ENCODE measurements at regions of chr4 and their contacts with region 1.

Region 1: GRCh38 chr4:17576932-17577665 is at the start of gene LAP3:
- DNase-seq: peak; percentile 99
- ATAC-seq: peak; percentile 90
- H3K4me3 Mint-ChIP-seq: peak within 1 kb of the TSS; percentile 89
- H3K27ac Mint-ChIP-seq: peak within 1 kb of the TSS; percentile 92
- H3K4me1 Mint-ChIP-seq: peaks cover 32% of the 10 kb centered on the region
- H3K27me3 Mint-ChIP-seq: no peaks in the 10 kb centered on the region
- CTCF ChIP-seq: no peak
- total RNA-seq, gene LAP3: 45.1 and 50.5 TPM in 2 replicates

Region 2: DNA sequence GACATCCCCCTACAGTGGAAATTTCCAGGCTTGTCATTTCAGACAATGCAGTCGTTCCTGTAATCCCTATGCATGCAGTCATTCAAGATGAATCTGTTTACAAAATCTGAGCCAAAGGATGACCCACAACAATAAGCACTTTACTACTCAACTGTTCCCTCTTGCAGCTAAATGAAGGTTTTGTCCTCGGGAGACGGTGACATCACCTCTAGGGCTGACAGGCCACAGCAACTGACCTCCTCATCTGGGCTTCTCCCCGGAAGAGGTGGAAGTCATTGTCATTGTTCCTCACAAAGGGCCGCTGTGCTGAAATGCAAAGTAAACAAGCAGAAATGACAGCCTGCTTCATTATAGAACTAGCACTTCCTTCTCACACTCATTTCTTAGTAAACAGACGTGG is 32.9 kb before region 1 on chr4:
- CTCF ChIA-PET with region 1: interaction called, 3 read pairs
- POLR2A ChIA-PET with region 1: no interaction called
- intact Hi-C with region 1: loop called (anchors 1 kb)
- DNase-seq: no peak
- ATAC-seq: no peak
- H3K4me3 Mint-ChIP-seq: no peak overlapping the region
- H3K27ac Mint-ChIP-seq: no peak overlapping the region
- H3K4me1 Mint-ChIP-seq: peaks cover 3% of the 10 kb centered on the region
- H3K27me3 Mint-ChIP-seq: peaks cover 9% of the 10 kb centered on the region
- CTCF ChIP-seq: no peak

Region 3: DNA sequence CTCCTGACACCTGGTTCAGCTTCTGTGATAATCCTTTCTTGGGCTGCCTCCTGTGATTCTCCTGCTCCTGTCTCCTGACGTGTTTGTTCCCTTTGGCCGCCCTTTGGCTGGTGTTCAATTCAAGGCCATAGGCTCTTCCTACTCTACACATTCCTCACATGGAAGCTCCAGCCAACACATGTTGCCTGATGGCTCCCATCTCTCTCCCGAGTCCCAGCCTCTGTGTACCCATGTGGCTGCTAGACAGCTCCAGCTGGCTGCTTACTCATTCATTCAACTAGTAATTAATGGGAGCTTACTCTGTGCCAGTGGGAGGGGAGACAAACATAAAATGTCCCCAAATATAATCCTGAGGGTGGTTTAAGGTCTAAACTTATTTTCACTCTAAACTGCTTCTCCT is 28.1 kb after region 1 on chr4:
- CTCF ChIA-PET with region 1: no interaction called
- POLR2A ChIA-PET with region 1: interaction called, 11 read pairs
- intact Hi-C with region 1: no loop called
- DNase-seq: no peak
- ATAC-seq: no peak
- H3K4me3 Mint-ChIP-seq: no peak overlapping the region
- H3K27ac Mint-ChIP-seq: no peak overlapping the region
- H3K4me1 Mint-ChIP-seq: no peaks in the 10 kb centered on the region
- H3K27me3 Mint-ChIP-seq: no peaks in the 10 kb centered on the region
- CTCF ChIP-seq: no peak

Region 4: DNA sequence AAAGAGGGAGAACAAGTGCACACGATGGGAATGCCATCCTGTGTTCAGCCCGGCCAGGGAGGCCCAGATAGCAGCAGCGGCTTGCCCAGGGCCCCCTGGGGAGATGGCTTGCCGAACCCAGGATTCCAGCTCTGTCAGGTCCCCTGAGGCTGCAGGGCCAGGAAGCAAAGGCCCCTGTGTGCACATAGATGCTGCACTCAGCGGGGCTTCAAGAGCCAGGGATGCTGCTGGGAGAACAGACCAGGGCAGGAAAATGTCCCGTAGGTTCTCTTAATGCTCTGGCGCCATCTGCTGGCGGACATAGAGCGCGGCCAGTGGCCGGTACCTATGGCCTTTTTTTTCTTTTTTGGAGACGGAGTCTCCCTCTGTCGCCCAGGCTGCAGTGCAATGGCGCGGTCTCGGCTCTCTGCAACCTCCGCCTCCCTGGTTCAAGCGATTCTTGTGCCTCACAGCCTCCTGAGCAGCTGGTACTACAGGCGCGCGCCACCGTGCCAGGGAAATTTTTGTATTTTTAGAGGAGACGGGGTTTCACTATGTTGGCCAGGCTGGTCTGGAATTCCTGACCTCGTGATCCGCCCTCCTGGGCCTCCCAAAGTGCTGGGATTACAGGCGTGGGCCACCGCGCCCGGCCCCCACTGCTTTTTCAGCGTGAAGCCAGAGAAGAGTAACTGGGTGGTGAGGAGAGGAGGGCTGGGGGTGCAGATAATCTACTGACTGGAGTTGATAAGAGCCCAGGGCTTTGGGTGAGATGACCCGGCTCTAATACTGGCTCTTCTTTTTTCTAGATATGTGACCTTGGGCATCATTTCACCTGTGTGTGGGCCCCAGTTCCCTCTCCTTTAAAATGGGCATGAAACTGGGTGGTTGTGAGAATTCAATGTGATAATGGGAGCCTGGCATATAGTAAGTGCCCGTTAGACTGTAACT is 59.9 kb after region 1 on chr4:
- CTCF ChIA-PET with region 1: interaction called, 4 read pairs
- POLR2A ChIA-PET with region 1: no interaction called
- intact Hi-C with region 1: loop called (anchors 2 kb)
- DNase-seq: peak; percentile 66
- ATAC-seq: peak; percentile 75
- H3K4me3 Mint-ChIP-seq: no peak overlapping the region
- H3K27ac Mint-ChIP-seq: no peak overlapping the region
- H3K4me1 Mint-ChIP-seq: peaks cover 2% of the 10 kb centered on the region
- H3K27me3 Mint-ChIP-seq: no peaks in the 10 kb centered on the region
- CTCF ChIP-seq: peak; percentile 44

Region 5: GRCh38 chr4:17670423-17670822 is 93.3 kb after region 1 on chr4:
- CTCF ChIA-PET with region 1: no interaction called
- POLR2A ChIA-PET with region 1: no interaction called
- intact Hi-C with region 1: no loop called
- DNase-seq: no peak
- ATAC-seq: no peak
- H3K4me3 Mint-ChIP-seq: no peak overlapping the region
- H3K27ac Mint-ChIP-seq: no peak overlapping the region
- H3K4me1 Mint-ChIP-seq: peaks cover 16% of the 10 kb centered on the region
- H3K27me3 Mint-ChIP-seq: peaks cover 35% of the 10 kb centered on the region
- CTCF ChIP-seq: no peak

Region 6: GRCh38 chr4:17810260-17811077 is 233.4 kb after region 1 on chr4 and contains the starts of genes DCAF16 and NCAPG:
- CTCF ChIA-PET with region 1: no interaction called
- POLR2A ChIA-PET with region 1: no interaction called
- intact Hi-C with region 1: loop called (anchors 1 kb)
- DNase-seq: peak; percentile 98
- ATAC-seq: peak; percentile 93
- H3K4me3 Mint-ChIP-seq: peak within 1 kb of the TSS; percentile 96
- H3K27ac Mint-ChIP-seq: peak within 1 kb of the TSS; percentile 96
- H3K4me1 Mint-ChIP-seq: peaks cover 57% of the 10 kb centered on the region
- H3K27me3 Mint-ChIP-seq: no peaks in the 10 kb centered on the region
- CTCF ChIP-seq: no peak
- total RNA-seq, gene DCAF16: 42.9 and 57.2 TPM in 2 replicates
- total RNA-seq, gene NCAPG: 1.1 and 1.5 TPM in 2 replicates